GM10248 (cell line): ENCODE measurements at regions of chr9 and their contacts with region 1.

Region 1: DNA sequence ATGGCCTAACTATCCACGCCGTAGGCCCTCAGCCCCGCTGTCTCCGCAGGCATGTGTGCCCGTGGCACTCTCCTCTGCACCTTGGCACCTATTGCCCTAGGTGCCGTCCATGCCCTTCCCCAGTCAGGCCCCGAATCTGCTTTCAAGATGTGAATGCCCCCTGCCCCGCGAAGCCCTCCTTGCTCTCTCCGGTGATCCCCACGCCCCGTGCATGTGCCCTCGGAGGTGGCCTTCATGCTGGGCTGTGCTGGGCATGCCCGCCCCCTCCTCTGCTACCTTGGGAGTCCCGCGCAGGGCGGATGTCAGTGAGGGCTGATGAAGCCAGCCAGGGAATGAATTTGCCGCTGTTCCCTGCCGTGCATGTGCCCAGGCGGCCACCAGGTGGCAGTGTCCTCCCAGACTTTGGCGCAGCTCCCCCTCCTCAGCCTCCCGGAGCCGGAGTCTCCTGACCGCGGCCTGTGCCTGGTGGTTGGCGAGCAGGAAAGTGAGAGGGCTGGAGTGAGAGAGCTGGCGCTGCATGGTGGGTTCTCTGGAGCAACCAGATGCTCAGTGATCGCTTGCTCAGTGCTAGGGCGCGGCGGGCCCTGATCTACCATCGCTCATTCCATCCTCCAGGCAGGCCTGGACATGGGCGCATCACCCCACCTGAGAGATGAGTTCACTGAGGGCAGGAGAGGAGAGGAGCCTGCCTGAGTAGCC is 112.9 kb upstream of the LMX1B start:
- DNase-seq: peak; percentile 83
- CTCF ChIP-seq: peak; percentile 92

Region 2: GRCh38 chr9:126482361-126483044 is 18.3 kb before region 1 on chr9:
- CTCF ChIA-PET with region 1: interaction called, 18 read pairs
- POLR2A ChIA-PET with region 1: no interaction called
- DNase-seq: no peak
- CTCF ChIP-seq: no peak

Region 3: GRCh38 chr9:126532019-126532462 is 31.2 kb after region 1 on chr9:
- CTCF ChIA-PET with region 1: interaction called, 18 read pairs
- POLR2A ChIA-PET with region 1: no interaction called
- DNase-seq: no peak
- CTCF ChIP-seq: no peak

Region 4: DNA sequence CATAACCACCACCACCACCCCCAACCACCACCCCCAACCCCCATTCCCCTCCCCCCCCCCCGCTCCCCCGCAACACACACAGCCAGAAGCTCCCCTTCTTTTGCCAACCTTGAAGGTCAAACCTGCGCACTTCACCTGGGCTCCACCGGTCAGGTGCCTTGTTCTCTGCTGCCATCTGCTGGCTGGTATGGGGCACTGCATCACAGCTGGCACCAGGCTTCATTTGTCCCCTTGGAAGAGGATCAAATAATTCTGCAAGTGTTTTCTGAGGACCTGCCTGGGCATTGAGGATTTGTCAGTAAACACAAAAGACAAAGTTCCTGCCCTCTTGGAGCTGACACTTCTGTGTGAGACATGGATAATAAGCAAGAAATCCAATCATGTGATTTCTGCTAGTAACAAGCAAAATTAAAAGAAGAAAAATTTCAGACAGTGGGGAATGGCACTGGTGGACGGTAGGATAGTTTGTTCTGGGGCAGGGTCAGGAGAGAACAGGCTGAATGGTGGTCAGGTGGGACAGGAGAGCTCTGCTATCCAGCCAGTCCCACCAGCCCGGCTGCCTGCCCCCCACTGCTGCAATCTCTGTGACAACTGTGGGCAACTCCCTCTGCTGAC is 57.3 kb after region 1 on chr9:
- CTCF ChIA-PET with region 1: interaction called, 193 read pairs
- POLR2A ChIA-PET with region 1: no interaction called
- DNase-seq: peak; percentile 84
- CTCF ChIP-seq: peak; percentile 99

Region 5: DNA sequence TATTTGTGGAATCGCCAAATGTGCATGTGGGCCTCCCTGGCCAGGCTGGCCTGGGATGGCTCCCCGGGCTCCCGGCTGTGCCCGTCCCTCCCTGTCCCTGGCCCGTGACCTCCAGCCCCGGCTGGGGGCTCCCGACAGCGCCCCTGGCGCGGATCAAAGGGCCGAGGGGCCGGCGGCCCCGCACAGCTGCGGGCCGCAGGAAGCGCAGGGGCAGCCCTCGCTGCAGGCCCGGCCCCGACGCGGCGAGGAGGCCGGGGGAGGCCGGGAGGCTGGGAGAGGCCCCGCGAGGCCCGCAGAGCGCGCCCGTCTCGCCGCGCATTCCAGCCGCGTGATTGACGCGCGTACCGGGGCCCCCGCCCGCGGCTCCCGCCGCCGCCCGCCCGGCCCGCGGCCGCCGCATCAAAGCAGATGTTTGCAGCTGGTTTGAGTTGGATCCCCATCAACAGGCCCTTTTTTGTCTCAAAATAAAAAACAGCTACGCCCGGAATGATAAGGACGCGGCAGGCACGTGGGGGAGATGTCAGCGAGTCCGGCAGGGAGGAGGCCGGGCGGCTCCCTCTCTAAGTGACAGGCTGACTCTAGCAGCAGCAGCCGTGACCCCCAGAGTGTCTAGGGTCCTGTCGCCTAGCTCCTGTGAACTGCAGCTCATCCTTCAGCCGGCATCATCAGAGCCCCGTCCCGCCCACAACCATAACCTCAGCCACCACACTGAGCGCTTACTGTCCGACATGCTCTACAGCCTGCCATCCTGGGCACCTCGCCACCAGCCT is 182.3 kb after region 1 on chr9:
- CTCF ChIA-PET with region 1: no interaction called
- POLR2A ChIA-PET with region 1: no interaction called
- DNase-seq: no peak
- CTCF ChIP-seq: no peak